Transverse colon (tissue), 4 donors: ENCODE measurements at regions of chr17 and their contacts with region 1.

Region 1: GRCh38 chr17:77372444-77373298 is 231.9 kb downstream of the SEC14L1 start:
- DNase-seq: peak; percentile 81
- H3K4me3 ChIP-seq: peak overlapping the region; percentile 63 to 73 (median 69)
- H3K27ac ChIP-seq: peak overlapping the region; percentile 91 to 96 (median 94)
- H3K4me1 ChIP-seq: peaks cover 37 to 60% (median 53%) of the 10 kb centered on the region in 4 donors
- H3K27me3 ChIP-seq: no peaks in the 10 kb centered on the region
- CTCF ChIP-seq: no peak
- EP300 ChIP-seq: no peak
- POLR2A ChIP-seq: peak; percentile 17

Region 2: GRCh38 chr17:77217566-77217965 is 155.1 kb before region 1 on chr17:
- in situ Hi-C with region 1: no loop called
- intact Hi-C with region 1: no loop called
- DNase-seq: no peak
- H3K4me3 ChIP-seq: no peak overlapping the region
- H3K27ac ChIP-seq: no peak overlapping the region
- H3K4me1 ChIP-seq: peaks cover 0 to 4% (median 0%) of the 10 kb centered on the region in 4 donors
- H3K27me3 ChIP-seq: no peaks in the 10 kb centered on the region
- CTCF ChIP-seq: no peak
- EP300 ChIP-seq: no peak
- POLR2A ChIP-seq: no peak

Region 3: DNA sequence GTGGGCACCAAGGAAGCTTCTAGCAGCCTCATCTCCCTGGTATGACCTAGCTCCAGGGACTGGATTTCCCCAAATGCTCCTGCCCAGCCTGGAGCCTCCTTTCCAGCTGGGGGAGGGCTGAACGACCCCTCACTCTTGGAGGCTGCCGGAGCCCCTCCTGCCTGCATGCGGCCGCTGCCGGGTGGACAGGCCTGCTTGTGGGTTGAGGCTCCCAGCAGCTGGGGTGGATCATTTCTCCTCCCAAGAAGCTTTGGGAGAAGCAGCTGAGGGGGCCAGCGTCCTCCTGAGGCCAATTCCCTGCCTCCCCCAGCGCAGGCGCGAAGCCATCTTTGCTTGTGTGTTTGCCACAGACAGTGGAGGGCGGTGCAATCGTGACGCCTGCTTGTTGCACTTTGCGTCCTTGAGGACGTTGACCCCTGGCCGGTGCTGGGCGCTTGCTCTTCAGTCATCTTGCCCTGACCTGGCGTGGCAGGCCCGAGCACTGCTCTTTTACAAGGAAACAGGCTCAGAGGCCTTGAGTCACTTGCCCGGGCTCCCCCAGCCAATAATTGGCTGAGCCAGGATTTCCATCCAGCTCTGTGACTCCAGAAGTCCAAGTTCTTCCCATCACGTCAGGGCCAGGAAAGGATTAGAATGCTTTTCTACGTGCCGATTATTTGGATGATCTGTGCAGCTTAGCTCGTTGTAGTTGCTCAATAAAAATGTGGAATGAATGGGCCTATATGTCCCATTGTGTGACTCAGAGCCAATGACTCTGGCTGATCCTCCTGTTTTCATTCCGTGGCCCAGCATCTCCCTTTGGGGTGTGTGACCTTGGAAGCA is 18.0 kb before region 1 on chr17:
- in situ Hi-C with region 1: no loop called
- intact Hi-C with region 1: loop called (anchors 1 kb)
- DNase-seq: peak; percentile 72
- H3K4me3 ChIP-seq: no peak overlapping the region
- H3K27ac ChIP-seq: peak overlapping the region; percentile 61 to 76 (median 69)
- H3K4me1 ChIP-seq: peaks cover 18 to 35% (median 29%) of the 10 kb centered on the region in 4 donors
- H3K27me3 ChIP-seq: no peaks in the 10 kb centered on the region
- CTCF ChIP-seq: no peak
- EP300 ChIP-seq: no peak
- POLR2A ChIP-seq: no peak

Region 4: DNA sequence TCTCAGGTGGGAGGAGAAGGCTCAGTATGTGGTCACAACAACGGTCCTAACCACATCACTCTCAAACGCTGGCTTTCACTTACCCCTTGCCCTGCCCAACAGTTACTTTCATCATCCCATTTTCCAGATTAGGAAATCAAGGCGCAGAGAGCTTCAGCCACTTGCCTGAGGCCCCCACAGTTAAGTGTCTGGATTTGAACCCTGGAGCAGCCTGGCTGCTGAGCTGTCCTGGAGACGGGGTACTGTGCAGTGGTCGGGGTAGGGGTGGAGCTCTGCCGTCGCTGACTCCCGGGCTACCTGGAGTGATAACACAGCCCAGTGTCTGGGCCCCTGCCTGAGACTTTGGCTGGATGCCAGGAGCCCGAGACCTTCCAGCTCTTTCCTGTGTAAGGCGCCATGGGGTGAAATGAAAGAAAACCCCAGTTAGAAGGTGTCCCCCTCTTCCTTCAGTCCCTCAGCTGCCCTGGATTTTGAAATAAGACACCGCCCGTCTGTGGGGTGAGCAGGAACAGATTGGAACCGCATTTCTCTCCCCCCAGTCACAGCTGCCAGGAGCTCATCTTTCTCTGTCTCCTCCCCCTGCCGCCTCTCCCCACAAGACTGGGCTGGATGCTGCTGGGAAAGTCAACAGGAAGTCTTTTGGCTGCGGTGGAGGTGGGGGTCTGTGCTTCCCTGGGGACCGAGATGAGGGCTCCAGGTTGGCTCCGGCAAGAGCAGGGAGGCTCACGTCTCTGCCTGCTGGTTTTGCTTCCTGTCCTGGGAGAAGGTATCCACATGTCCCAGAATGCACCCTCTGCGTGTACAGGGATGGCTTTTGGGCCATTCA is 48.3 kb after region 1 on chr17:
- in situ Hi-C with region 1: no loop called
- intact Hi-C with region 1: loop called (anchors 5 kb)
- DNase-seq: peak; percentile 56
- H3K4me3 ChIP-seq: no peak overlapping the region
- H3K27ac ChIP-seq: peak overlapping the region; percentile 89 to 95 (median 94)
- H3K4me1 ChIP-seq: peaks cover 48 to 68% (median 61%) of the 10 kb centered on the region in 4 donors
- H3K27me3 ChIP-seq: no peaks in the 10 kb centered on the region
- CTCF ChIP-seq: no peak
- EP300 ChIP-seq: no peak
- POLR2A ChIP-seq: no peak

Region 5: DNA sequence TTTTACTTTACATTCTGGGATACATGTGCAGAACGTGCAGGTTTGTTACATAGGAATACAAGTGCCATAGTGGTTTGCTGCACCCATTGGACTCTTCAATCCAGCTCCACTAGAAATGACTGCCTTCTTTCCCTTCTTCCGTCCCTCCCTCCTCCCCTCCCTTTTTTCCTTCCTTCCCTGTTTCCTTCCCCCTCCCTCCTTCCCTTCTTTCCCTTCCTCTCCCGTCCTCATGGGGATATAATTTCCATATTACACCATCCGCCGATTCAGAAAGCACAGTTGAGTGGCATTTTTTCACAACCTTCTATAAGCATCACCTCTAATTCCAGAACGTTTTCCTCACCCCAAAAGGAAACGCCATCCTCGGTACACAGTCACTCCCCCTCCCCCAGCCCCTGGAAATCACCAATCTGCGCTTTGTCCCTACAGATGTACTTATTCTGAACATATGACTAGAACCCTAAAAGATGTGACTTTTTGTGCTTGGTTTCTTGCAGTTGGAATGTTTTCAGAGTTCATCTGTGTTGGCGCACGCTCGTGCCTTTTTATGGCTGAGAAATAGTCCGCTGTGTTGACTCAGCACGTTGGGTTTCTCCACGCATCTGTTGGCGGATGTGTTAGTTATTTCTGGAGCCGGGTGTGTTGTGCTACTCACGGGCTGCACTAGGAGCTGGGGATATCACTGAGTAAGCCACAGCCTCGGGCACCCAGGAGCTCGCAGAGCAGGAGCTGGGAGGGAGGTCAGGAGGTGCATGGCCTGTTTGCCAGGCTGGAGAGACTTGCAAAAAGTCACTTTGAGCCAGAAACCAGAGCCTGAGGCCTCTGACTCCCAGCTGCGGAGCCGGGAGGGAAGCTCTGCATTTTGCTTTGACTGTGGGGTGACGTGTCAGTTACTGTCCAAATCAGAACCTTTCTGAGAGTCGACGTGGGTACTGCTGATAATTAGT is 104.5 kb after region 1 on chr17:
- in situ Hi-C with region 1: no loop called
- intact Hi-C with region 1: loop called (anchors 5 kb)
- DNase-seq: peak; percentile 65
- H3K4me3 ChIP-seq: no peak overlapping the region
- H3K27ac ChIP-seq: peak overlapping the region; percentile 69 to 87 (median 81)
- H3K4me1 ChIP-seq: peaks cover 65 to 91% (median 76%) of the 10 kb centered on the region in 4 donors
- H3K27me3 ChIP-seq: no peaks in the 10 kb centered on the region
- CTCF ChIP-seq: peak in 1 of 5 experiments; percentile 12
- EP300 ChIP-seq: peak; percentile 5
- POLR2A ChIP-seq: no peak